ENCODE measurements at regions of chr22 and their contacts with region 1.

Region 1: DNA sequence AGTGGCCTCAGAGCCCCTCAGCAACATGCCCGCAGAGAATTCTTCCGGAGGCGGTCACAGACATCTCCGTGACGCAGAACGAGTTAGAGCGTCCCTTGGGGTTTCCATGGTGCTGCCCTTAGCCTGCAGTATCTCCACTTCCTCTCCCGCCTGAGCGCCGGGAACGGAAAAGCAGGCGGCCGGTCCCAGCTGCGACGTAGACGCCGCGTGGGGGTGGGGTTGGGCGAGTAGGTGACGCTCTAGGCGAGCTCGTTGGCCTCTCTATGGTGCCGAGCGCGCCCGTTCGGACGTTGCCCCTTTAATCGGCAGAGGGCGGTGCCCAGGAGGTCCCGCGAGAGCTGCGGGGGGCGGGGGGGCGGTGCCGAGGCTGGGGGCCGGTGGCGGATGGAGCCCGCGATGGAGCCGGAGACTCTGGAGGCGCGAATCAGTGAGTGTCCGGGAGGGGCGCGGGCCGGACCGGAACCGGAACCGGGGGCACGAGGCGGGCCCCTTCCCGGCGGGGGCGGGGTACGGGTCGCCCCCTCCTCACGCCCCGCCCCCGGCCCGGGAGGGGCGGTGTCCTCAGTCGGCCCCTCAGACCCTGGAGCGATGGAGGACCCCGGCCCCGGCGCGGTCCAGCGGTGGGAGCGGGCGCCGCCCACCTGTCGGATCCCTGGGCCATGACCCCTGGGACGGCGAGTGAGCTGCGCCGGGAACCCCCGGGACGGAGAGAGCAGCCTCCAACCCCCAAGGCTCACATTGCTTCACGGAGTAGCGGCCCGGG is at the start of gene GGA1:
- DNase-seq: peak; percentile 89 to 100 (median 95)
- ATAC-seq: peak; percentile 76
- H3K4me3 ChIP-seq: peak within 1 kb of the TSS; percentile 71 to 84
- H3K4me3 Mint-ChIP-seq: peak within 1 kb of the TSS; percentile 89
- H3K27ac ChIP-seq: peak within 1 kb of the TSS; percentile 84 to 99
- H3K27ac Mint-ChIP-seq: peak within 1 kb of the TSS; percentile 92
- H3K4me1 ChIP-seq: peaks cover 58% of the 10 kb centered on the region
- H3K4me1 Mint-ChIP-seq: peaks cover 56% of the 10 kb centered on the region
- H3K27me3 ChIP-seq: no peaks in the 10 kb centered on the region
- H3K27me3 Mint-ChIP-seq: no peaks in the 10 kb centered on the region
- CTCF ChIP-seq: no peak
- total RNA-seq, gene GGA1: 66.0 to 69.1 TPM

Region 2: DNA sequence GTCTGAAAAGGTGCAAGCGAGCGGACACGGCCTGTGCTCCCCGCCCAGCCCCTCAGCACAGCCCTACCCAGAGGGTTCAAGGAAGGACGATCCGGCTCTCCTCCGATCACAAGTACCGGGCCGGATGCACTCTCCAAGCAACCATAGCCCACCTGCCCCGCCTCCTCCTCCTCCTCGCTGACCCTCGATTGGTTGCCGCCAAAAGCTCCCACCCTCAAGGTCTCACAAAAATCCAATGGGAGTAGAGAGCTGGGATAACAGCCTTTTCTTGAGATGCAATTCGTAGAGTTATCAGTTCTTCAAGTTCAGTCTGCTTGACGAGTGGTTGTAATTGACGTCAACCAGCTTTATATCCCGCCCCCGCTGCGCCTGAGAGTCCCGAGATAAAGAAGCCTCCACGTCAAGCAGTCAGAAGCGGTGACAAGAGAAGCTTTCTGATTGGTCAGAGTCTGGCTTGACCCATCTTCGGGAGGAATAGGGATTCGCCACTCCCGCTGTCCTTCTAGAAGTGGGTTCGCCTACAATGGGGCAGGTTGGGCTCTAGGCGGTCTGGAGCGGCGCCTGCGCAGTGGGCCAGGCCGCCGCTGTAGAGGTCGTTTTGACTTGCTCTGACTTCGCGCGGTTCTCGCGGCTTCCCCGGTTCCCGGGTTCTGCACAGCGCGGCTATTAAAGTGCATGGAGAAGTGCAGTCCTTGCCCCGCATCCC is 832.5 kb before region 1 on chr22 and contains the start of gene IFT27:
- CTCF ChIA-PET with region 1: no interaction called
- POLR2A ChIA-PET with region 1: interaction called, 3 read pairs
- intact Hi-C with region 1: loop called in 1 of 2 experiments (anchors 5 kb)
- DNase-seq: peak; percentile 89 to 100 (median 95)
- ATAC-seq: peak; percentile 84
- H3K4me3 ChIP-seq: peak within 1 kb of the TSS; percentile 72 to 73
- H3K4me3 Mint-ChIP-seq: peak within 1 kb of the TSS; percentile 93
- H3K27ac ChIP-seq: peak within 1 kb of the TSS; percentile 89 to 92
- H3K27ac Mint-ChIP-seq: peak within 1 kb of the TSS; percentile 94
- H3K4me1 ChIP-seq: peaks cover 14% of the 10 kb centered on the region
- H3K4me1 Mint-ChIP-seq: peaks cover 29% of the 10 kb centered on the region
- H3K27me3 ChIP-seq: no peaks in the 10 kb centered on the region
- H3K27me3 Mint-ChIP-seq: no peaks in the 10 kb centered on the region
- CTCF ChIP-seq: no peak
- total RNA-seq, gene IFT27: 9.2 to 9.9 TPM

Region 3: DNA sequence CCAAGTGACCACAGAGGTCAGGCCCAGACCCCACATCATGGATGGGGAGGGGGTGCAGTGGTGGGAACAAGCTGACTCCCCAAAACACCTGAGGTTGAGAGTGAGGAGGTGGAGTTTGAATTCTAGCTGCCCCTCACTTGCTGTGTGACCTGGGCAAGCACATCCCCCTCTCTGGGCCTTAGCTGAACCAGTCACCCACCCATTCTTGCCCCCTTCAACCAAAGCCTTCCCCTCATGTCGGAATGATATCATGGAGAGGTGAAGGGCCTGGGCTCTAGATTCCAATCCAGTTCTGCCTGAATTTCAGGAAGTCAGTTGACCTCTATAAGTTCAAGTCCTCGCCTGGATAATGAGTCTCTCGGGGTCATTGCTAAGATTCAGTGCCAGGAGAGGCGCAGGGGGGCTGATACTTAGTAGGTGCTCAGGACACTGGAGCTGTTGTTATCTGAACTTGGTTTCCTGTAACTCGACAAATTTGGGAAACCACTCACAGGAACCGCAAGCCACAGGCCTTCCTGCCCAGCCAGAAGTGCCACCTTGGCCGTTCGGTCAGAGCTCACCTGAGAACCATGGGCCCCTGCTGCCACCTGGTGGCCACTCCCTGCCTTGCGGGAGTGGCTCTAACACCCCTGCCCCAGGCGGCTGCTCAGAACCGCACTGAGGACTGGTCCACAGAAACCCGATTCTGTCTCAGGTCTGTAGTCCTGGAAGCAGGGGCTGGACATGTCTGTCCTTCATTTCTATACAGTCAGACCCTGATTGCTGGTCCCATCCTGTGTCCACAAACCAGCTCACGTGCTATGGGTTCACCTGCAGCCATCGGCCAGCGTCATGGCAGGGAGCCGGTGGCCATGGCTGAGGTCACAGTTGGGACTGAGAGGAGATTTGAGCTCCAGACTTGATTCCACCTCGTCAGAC is 41.5 kb before region 1 on chr22:
- CTCF ChIA-PET with region 1: interaction called, 26 read pairs
- POLR2A ChIA-PET with region 1: interaction called, 10 read pairs
- intact Hi-C with region 1: loop called in 1 of 2 experiments (anchors 5 kb)
- DNase-seq: peak; percentile 77 to 97 (median 92)
- ATAC-seq: peak; percentile 85
- H3K4me3 ChIP-seq: peak overlapping the region; percentile 9 to 10
- H3K4me3 Mint-ChIP-seq: peak overlapping the region; percentile 75
- H3K27ac ChIP-seq: no peak overlapping the region
- H3K27ac Mint-ChIP-seq: peak overlapping the region; percentile 66
- H3K4me1 ChIP-seq: peaks cover 24% of the 10 kb centered on the region
- H3K4me1 Mint-ChIP-seq: peaks cover 24% of the 10 kb centered on the region
- H3K27me3 ChIP-seq: peaks cover under 1 to 9% of the 10 kb centered on the region in 2 experiments
- H3K27me3 Mint-ChIP-seq: peaks cover 15% of the 10 kb centered on the region
- CTCF ChIP-seq: peak; percentile 93

Region 4: DNA sequence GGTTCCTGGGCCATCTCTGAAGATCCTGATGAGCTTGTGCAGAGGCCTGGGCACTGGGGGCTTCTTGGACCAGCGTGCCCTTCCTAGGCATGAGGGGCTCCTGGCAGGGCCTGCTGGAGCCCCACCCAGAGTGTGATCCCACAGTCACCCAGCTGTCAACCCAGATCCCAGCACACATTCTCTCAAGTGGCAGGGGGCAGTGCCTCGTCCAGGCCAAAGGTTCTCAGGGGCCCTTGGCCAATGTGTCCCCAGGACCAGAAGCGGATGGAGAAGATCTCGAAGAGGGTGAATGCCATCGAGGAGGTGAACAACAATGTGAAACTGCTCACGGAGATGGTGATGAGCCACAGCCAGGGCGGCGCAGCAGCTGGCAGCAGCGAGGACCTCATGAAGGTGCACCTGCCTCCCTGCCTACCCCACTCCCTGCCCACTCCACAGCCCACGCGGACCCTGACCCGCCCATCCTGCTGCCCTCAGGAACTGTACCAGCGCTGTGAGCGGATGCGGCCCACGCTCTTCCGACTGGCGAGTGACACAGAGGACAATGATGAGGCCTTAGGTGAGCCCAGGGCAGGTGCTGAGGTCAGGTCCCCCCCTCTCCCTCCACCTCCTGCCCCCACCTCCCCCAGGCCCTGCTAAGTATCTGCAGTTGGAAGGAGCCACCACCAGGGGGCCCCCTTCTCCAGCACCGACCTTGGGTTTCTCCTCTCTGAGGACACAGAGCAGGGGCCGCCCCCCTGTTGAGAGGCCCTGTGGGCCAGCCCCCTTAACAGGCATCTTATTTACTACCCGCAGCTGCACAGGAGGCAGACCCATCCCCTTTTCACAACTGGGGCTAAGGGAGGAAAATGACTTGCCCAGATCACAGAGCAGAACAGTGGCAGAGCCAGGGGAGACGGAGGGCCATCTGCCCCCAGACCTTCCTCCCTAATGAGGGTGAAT is 14.7 kb after region 1 on chr22:
- CTCF ChIA-PET with region 1: interaction called, 61 read pairs
- POLR2A ChIA-PET with region 1: interaction called, 45 read pairs
- intact Hi-C with region 1: loop called in 1 of 2 experiments (anchors 2 kb)
- DNase-seq: peak; percentile 64 to 87 (median 79)
- ATAC-seq: peak; percentile 86
- H3K4me3 ChIP-seq: peak overlapping the region in 1 of 2 experiments; percentile 25
- H3K4me3 Mint-ChIP-seq: peak overlapping the region; percentile 68
- H3K27ac ChIP-seq: peak overlapping the region; percentile 29 to 58
- H3K27ac Mint-ChIP-seq: peak overlapping the region; percentile 95
- H3K4me1 ChIP-seq: peaks cover 53% of the 10 kb centered on the region
- H3K4me1 Mint-ChIP-seq: peaks cover 50% of the 10 kb centered on the region
- H3K27me3 ChIP-seq: no peaks in the 10 kb centered on the region
- H3K27me3 Mint-ChIP-seq: no peaks in the 10 kb centered on the region
- CTCF ChIP-seq: peak; percentile 86

Region 5: DNA sequence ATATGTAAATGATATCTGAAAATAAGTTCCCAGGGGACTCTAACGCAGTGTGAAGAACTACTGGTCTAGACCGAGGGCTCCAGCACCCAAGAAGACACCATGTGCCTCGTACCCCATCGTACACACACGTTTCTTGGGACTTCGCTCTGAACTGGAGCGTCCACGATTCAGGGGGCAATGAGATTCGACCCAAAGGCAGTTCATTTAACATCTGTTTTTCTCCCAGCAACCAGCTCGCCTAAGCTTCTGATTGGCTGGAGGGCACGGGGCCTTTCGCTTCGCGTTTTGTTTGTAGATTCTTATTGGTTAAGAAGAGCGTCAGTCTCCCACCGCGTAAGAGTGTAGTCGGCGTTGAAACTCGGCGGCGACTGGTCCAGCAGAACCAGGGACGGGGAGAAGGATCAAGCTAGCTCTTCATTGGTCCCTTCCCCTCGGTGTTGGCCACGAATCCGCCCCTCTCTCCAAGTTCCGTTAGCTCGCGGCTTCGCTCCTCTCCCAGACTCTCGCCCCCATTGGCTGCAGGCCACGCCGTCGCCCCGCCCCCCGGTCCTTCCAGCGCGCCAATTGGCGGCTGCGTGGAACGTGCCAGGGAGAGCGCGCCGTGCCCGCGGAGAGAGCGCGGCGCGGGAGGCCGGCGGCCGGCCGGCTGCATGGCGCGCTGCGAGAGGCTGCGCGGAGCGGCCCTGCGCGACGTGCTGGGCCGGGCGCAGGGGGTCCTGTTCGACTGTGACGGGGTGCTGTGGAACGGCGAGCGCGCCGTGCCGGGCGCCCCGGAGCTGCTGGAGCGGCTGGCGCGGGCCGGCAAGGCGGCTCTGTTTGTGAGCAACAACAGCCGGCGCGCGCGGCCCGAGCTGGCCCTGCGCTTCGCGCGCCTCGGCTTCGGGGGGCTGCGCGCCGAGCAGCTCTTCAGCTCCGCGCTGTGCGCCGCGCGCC is 49.7 kb after region 1 on chr22 and contains the start of gene PDXP:
- CTCF ChIA-PET with region 1: interaction called, 2,176 read pairs
- POLR2A ChIA-PET with region 1: interaction called, 26 read pairs
- intact Hi-C with region 1: loop called (anchors 1 kb)
- DNase-seq: peak; percentile 95 to 99 (median 99)
- ATAC-seq: peak; percentile 90
- H3K4me3 ChIP-seq: peak within 1 kb of the TSS; percentile 50 to 66
- H3K4me3 Mint-ChIP-seq: peak within 1 kb of the TSS; percentile 87
- H3K27ac ChIP-seq: peak within 1 kb of the TSS; percentile 8 to 76
- H3K27ac Mint-ChIP-seq: peak within 1 kb of the TSS; percentile 95
- H3K4me1 ChIP-seq: peaks cover 33% of the 10 kb centered on the region
- H3K4me1 Mint-ChIP-seq: peaks cover 37% of the 10 kb centered on the region
- H3K27me3 ChIP-seq: no peaks in the 10 kb centered on the region
- H3K27me3 Mint-ChIP-seq: no peaks in the 10 kb centered on the region
- CTCF ChIP-seq: no peak
- total RNA-seq, gene PDXP: 2.4 to 3.2 TPM

Region 6: GRCh38 chr22:37708580-37709444 is 100.2 kb after region 1 on chr22:
- CTCF ChIA-PET with region 1: no interaction called
- POLR2A ChIA-PET with region 1: no interaction called
- intact Hi-C with region 1: no loop called
- DNase-seq: no peak
- ATAC-seq: no peak
- H3K4me3 ChIP-seq: no peak overlapping the region
- H3K4me3 Mint-ChIP-seq: no peak overlapping the region
- H3K27ac ChIP-seq: no peak overlapping the region
- H3K27ac Mint-ChIP-seq: no peak overlapping the region
- H3K4me1 ChIP-seq: no peaks in the 10 kb centered on the region
- H3K4me1 Mint-ChIP-seq: no peaks in the 10 kb centered on the region
- H3K27me3 ChIP-seq: no peaks in the 10 kb centered on the region
- H3K27me3 Mint-ChIP-seq: no peaks in the 10 kb centered on the region
- CTCF ChIP-seq: no peak

Region 7: GRCh38 chr22:37745548-37746365 is 137.1 kb after region 1 on chr22:
- CTCF ChIA-PET with region 1: no interaction called
- POLR2A ChIA-PET with region 1: interaction called, 3 read pairs
- intact Hi-C with region 1: loop called (anchors 1 to 5 kb)
- DNase-seq: peak; percentile 69 to 91 (median 85)
- ATAC-seq: peak; percentile 96
- H3K4me3 ChIP-seq: peak overlapping the region; percentile 67 to 85
- H3K4me3 Mint-ChIP-seq: peak overlapping the region; percentile 90
- H3K27ac ChIP-seq: peak overlapping the region; percentile 37 to 39
- H3K27ac Mint-ChIP-seq: peak overlapping the region; percentile 81
- H3K4me1 ChIP-seq: peaks cover 26% of the 10 kb centered on the region
- H3K4me1 Mint-ChIP-seq: peaks cover 18% of the 10 kb centered on the region
- H3K27me3 ChIP-seq: no peaks in the 10 kb centered on the region
- H3K27me3 Mint-ChIP-seq: no peaks in the 10 kb centered on the region
- CTCF ChIP-seq: no peak

Region 8: GRCh38 chr22:37953437-37954179 is 344.9 kb after region 1 on chr22 and contains the starts of genes C22orf23 and POLR2F:
- CTCF ChIA-PET with region 1: no interaction called
- POLR2A ChIA-PET with region 1: no interaction called
- intact Hi-C with region 1: loop called in 1 of 2 experiments (anchors 5 kb)
- DNase-seq: peak; percentile 88 to 98 (median 97)
- ATAC-seq: peak; percentile 94
- H3K4me3 ChIP-seq: peak within 1 kb of the TSS; percentile 91 to 98
- H3K4me3 Mint-ChIP-seq: peak within 1 kb of the TSS; percentile 100
- H3K27ac ChIP-seq: peak within 1 kb of the TSS; percentile 62 to 79
- H3K27ac Mint-ChIP-seq: peak within 1 kb of the TSS; percentile 98
- H3K4me1 ChIP-seq: peaks cover 13% of the 10 kb centered on the region
- H3K4me1 Mint-ChIP-seq: peaks cover 45% of the 10 kb centered on the region
- H3K27me3 ChIP-seq: peaks cover 0 to 6% of the 10 kb centered on the region in 2 experiments
- H3K27me3 Mint-ChIP-seq: peaks cover 12% of the 10 kb centered on the region
- CTCF ChIP-seq: no peak
- total RNA-seq, gene C22orf23: 0.43 TPM in 1 of 2 experiments, not detected in the other
- total RNA-seq, gene POLR2F: 22.7 to 25.6 TPM

Region 9: GRCh38 chr22:38479096-38479837 is 870.6 kb after region 1 on chr22:
- CTCF ChIA-PET with region 1: no interaction called
- POLR2A ChIA-PET with region 1: no interaction called
- intact Hi-C with region 1: no loop called
- DNase-seq: no peak
- ATAC-seq: no peak
- H3K4me3 ChIP-seq: no peak overlapping the region
- H3K4me3 Mint-ChIP-seq: no peak overlapping the region
- H3K27ac ChIP-seq: peak overlapping the region in 1 of 2 experiments; percentile 46
- H3K27ac Mint-ChIP-seq: peak overlapping the region; percentile 13
- H3K4me1 ChIP-seq: no peaks in the 10 kb centered on the region
- H3K4me1 Mint-ChIP-seq: peaks cover 19% of the 10 kb centered on the region
- H3K27me3 ChIP-seq: no peaks in the 10 kb centered on the region
- H3K27me3 Mint-ChIP-seq: no peaks in the 10 kb centered on the region
- CTCF ChIP-seq: no peak

Region 10: GRCh38 chr22:38815844-38816243 is 1207.2 kb after region 1 on chr22:
- CTCF ChIA-PET with region 1: no interaction called
- POLR2A ChIA-PET with region 1: no interaction called
- intact Hi-C with region 1: no loop called
- DNase-seq: no peak
- ATAC-seq: no peak
- H3K4me3 ChIP-seq: no peak overlapping the region
- H3K4me3 Mint-ChIP-seq: no peak overlapping the region
- H3K27ac ChIP-seq: no peak overlapping the region
- H3K27ac Mint-ChIP-seq: no peak overlapping the region
- H3K4me1 ChIP-seq: no peaks in the 10 kb centered on the region
- H3K4me1 Mint-ChIP-seq: no peaks in the 10 kb centered on the region
- H3K27me3 ChIP-seq: peaks cover 0 to 5% of the 10 kb centered on the region in 2 experiments
- H3K27me3 Mint-ChIP-seq: peaks cover 14% of the 10 kb centered on the region
- CTCF ChIP-seq: no peak

Measured in CD8-positive, alpha-beta T cell (primary cell).